Activated naive CD4-positive, alpha-beta T cell treated with anti-CD3 and anti-CD28 coated beads for 36 hours (primary cell): ENCODE measurements at regions of chr17 and their contacts with region 1.

Region 1: GRCh38 chr17:82292251-82293154 is 19.0 kb upstream of the CSNK1D start:
- DNase-seq: peak; percentile 96
- H3K4me3 Mint-ChIP-seq: peak overlapping the region; percentile 82
- H3K27ac Mint-ChIP-seq: peak overlapping the region; percentile 85
- H3K4me1 Mint-ChIP-seq: peaks cover 42% of the 10 kb centered on the region
- H3K27me3 Mint-ChIP-seq: no peaks in the 10 kb centered on the region

Region 2: GRCh38 chr17:81927653-81928543 is 364.6 kb before region 1 on chr17 and contains the start of gene MAFG:
- CTCF ChIA-PET with region 1: no interaction called
- intact Hi-C with region 1: no loop called
- DNase-seq: peak; percentile 88
- H3K4me3 Mint-ChIP-seq: peak within 1 kb of the TSS; percentile 76
- H3K27ac Mint-ChIP-seq: peak within 1 kb of the TSS; percentile 86
- H3K4me1 Mint-ChIP-seq: peaks cover 26% of the 10 kb centered on the region
- H3K27me3 Mint-ChIP-seq: peaks cover 5% of the 10 kb centered on the region
- total RNA-seq, gene MAFG: 13.5 to 14.8 TPM

Region 3: DNA sequence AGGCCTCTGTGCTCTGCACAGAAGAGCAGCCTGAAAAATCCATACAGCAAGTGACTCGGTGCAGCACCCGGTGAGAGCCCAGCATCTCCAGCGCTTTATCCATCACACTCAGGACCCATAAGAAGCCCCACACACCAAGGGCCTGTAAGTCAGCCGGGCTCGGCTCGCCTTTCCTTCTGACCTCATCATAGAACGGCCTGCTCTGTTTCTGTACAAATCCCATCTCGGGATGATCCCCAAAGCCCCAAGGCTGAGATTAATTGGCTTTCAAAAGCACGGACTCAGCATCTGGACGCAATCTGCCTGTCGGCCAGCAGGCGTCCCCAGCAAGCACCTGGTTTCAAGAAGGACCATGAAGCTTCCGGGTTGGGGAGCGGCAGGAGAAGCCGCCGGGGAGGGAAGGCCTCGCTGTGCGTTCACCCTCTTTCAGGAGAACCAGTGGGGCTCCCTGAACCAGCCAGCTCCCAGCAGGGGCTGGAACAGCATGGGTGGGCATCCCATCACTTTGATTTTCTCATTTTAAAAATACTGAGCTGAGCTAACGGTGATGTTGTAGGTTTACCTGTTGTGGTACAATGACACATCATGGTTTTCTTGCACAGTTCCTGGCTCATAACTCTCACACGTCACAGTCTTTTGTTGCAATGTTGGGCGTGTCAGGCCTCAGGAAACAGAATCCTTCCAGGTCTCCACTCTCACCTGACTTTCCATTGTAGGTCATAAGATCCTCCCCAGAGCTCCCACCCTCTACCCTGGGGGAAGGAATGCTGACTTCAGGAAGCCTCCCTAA is 86.6 kb before region 1 on chr17:
- CTCF ChIA-PET with region 1: no interaction called
- intact Hi-C with region 1: loop called (anchors 10 kb)
- DNase-seq: peak; percentile 89
- H3K4me3 Mint-ChIP-seq: peak overlapping the region; percentile 70
- H3K27ac Mint-ChIP-seq: peak overlapping the region; percentile 93
- H3K4me1 Mint-ChIP-seq: peaks cover 50% of the 10 kb centered on the region
- H3K27me3 Mint-ChIP-seq: no peaks in the 10 kb centered on the region

Region 4: DNA sequence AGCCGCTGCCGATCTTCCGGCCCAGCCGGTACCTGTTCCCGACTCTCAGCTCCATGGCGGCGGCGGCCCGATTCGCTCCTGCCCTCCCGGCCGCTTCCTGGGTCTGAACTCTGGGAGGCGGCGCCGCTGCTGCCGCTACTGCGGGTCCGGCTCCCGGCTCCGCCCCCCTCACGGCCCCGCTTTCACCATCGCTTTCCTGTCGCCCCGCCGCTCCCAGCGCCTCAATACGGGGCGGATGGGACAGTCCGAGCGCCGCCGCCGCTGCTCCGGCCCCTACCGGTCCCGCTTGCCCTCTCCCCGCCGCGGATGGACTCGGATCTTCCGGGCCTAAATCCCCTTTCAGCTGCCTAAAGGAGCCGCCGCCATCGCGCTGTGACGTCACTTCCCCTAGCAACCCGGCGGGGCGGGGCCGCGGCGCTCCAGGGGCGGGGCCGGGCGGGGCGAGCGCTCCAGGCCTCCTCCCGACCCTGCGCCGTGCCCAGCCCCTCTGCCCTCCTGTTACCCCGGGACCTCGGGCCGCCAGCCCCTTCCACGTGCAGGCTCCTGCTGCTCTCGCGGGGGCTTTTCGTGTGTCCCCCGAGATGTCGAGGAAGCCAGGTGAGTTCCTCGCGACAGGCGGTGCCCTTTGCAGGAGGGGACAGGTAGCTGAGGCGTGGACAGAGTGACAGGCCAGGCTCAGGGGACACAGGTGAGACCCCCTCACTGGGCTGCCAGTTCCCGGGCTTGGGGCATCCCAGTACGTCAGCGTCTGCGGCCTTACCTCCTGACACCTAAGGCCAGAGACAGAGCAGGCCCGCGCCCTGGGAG is 19.0 kb before region 1 on chr17 and contains the start of gene CSNK1D:
- CTCF ChIA-PET with region 1: no interaction called
- intact Hi-C with region 1: loop called (anchors 1 kb)
- DNase-seq: peak; percentile 93
- H3K4me3 Mint-ChIP-seq: peak within 1 kb of the TSS; percentile 81
- H3K27ac Mint-ChIP-seq: peak within 1 kb of the TSS; percentile 94
- H3K4me1 Mint-ChIP-seq: peaks cover 39% of the 10 kb centered on the region
- H3K27me3 Mint-ChIP-seq: no peaks in the 10 kb centered on the region
- total RNA-seq, gene CSNK1D: 99.8 to 100 TPM